PC-9 (cell line): ENCODE measurements at regions of chr3 and their contacts with region 1.

Region 1: DNA sequence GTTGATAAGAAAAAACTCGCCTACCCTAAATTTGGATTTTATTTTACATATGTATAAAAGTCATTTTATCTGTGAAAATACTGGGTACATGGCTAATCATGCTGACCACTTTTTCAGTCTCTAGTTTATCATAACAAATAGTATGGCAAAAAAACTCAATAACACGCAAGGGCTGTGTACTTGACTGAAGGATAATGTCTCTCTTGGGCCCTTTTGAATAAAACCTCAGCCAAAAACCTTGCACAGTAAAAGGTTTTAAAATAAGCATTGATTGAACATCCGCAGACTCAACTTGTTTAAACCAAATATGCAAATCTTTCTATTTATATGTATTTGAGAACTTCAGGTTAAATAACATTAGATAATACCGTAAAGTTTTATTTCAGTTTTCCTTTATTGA is 285.3 kb downstream of the CADM2 start:
- DNase-seq: no peak
- H3K4me3 ChIP-seq: no peak overlapping the region
- H3K27ac ChIP-seq: no peak overlapping the region
- H3K4me1 ChIP-seq: no peaks in the 10 kb centered on the region
- H3K27me3 ChIP-seq: no peaks in the 10 kb centered on the region
- CTCF ChIP-seq: no peak

Region 2: GRCh38 chr3:85081191-85081895 is 162.7 kb before region 1 on chr3:
- CTCF ChIA-PET with region 1: no interaction called
- POLR2A ChIA-PET with region 1: interaction called, 10 read pairs
- intact Hi-C with region 1: no loop called
- DNase-seq: peak in 1 of 2 experiments; percentile 37
- H3K4me3 ChIP-seq: no peak overlapping the region
- H3K27ac ChIP-seq: no peak overlapping the region
- H3K4me1 ChIP-seq: no peaks in the 10 kb centered on the region
- H3K27me3 ChIP-seq: no peaks in the 10 kb centered on the region
- CTCF ChIP-seq: no peak